ENCODE measurements at regions of chr1 and their contacts with region 1.

Region 1: DNA sequence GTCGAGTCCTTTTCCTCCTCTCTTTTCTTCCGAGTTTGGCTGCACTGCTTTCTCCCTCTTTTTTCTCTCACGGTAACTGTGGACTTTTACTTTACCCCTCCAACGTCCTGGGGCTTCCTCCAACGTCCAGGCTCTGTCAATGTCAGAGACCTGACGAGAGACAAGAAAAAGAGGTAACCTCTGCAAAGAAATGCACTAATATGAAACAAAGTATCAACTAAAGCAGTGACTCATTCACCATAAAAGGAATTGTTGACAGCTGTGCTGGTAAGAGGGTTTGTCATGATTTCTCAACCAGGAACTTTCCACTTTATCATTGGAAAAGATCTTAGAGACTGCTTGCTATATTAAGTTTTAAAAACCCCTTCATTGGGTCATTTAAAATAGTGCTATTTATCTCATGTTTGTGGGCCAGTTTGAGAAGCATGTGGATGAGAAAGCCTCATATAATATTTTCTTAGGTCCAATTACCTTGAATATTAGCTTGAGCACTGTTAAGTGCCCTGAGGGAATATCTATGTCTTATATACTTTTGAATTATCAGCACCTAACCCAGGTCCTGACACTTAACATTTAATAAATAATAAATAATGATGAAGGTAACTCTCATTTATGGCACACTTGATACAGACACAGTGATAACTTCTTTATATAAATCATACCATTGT is at the start of gene GBP2:
- DNase-seq: peak in 7 of 14 experiments; percentile 18 to 86 (median 41)
- ATAC-seq: peak; percentile 81
- H3K4me3 ChIP-seq: peak within 1 kb of the TSS; percentile 83
- H3K4me3 Mint-ChIP-seq: peak within 1 kb of the TSS; percentile 100
- H3K27ac ChIP-seq: peak within 1 kb of the TSS; percentile 51 to 86
- H3K27ac Mint-ChIP-seq: peak within 1 kb of the TSS; percentile 96
- H3K4me1 ChIP-seq: peaks cover 23% of the 10 kb centered on the region
- H3K4me1 Mint-ChIP-seq: peaks cover 76% of the 10 kb centered on the region
- H3K27me3 ChIP-seq: no peaks in the 10 kb centered on the region
- H3K27me3 Mint-ChIP-seq: no peaks in the 10 kb centered on the region
- CTCF ChIP-seq: no peak
- total RNA-seq, gene GBP2: 87.6 to 91.8 TPM

Region 2: DNA sequence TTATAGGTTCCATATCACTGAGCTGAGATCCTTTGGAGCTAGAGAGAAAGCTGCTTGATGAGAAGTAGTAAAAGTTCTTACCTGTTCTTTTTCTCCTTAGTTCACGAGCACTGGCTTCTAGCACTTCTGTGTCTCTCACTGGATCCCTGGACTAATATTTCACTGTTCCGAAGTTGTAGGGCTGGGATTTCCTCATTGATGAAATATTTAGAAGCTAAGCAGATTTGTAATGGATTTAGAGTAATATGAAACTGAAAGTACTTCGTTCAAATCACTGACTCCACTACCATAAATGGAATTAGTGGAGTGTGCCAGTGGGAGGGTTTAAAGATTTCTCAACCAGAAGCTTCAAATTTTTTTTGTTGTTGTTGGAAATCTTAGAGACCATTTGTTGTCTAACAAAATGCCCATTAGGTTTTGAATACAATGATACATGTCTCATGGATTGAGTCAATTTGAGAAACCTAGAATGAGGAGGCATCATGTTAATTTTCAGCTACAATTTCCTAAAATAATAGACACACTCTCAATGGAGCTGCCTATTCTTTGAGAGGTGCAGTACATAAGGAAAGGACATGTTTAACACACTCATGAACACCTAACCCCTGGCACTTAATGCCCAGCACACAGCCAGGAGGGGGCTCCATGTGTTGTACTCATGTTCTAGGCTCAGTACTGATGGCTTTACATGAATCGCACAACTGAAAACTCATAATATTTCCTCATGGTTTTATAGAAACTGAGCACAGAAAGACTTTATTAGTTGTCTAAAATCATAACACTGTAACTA is 60.8 kb before region 1 on chr1 and contains the start of gene GBP1:
- CTCF ChIA-PET with region 1: no interaction called
- POLR2A ChIA-PET with region 1: interaction called, 18 read pairs
- intact Hi-C with region 1: loop called in 1 of 2 experiments (anchors 5 kb)
- DNase-seq: peak in 4 of 14 experiments; percentile 14 to 81 (median 71)
- ATAC-seq: peak; percentile 87
- H3K4me3 ChIP-seq: peak within 1 kb of the TSS; percentile 61
- H3K4me3 Mint-ChIP-seq: peak within 1 kb of the TSS; percentile 97
- H3K27ac ChIP-seq: peak within 1 kb of the TSS; percentile 69 to 70
- H3K27ac Mint-ChIP-seq: peak within 1 kb of the TSS; percentile 93
- H3K4me1 ChIP-seq: peaks cover 13% of the 10 kb centered on the region
- H3K4me1 Mint-ChIP-seq: peaks cover 74% of the 10 kb centered on the region
- H3K27me3 ChIP-seq: no peaks in the 10 kb centered on the region
- H3K27me3 Mint-ChIP-seq: no peaks in the 10 kb centered on the region
- CTCF ChIP-seq: no peak
- total RNA-seq, gene GBP1: 15.5 to 16.5 TPM

Region 3: GRCh38 chr1:89114662-89115061 is 11.4 kb before region 1 on chr1:
- CTCF ChIA-PET with region 1: interaction called, 3 read pairs
- POLR2A ChIA-PET with region 1: interaction called, 32 read pairs
- intact Hi-C with region 1: no loop called
- DNase-seq: no peak
- ATAC-seq: no peak
- H3K4me3 ChIP-seq: no peak overlapping the region
- H3K4me3 Mint-ChIP-seq: no peak overlapping the region
- H3K27ac ChIP-seq: no peak overlapping the region
- H3K27ac Mint-ChIP-seq: peak overlapping the region; percentile 34
- H3K4me1 ChIP-seq: peaks cover 4% of the 10 kb centered on the region
- H3K4me1 Mint-ChIP-seq: peaks cover 24% of the 10 kb centered on the region
- H3K27me3 ChIP-seq: no peaks in the 10 kb centered on the region
- H3K27me3 Mint-ChIP-seq: no peaks in the 10 kb centered on the region
- CTCF ChIP-seq: no peak

Region 4: GRCh38 chr1:89280766-89281165 is 154.7 kb after region 1 on chr1:
- CTCF ChIA-PET with region 1: no interaction called
- POLR2A ChIA-PET with region 1: interaction called, 44 read pairs
- intact Hi-C with region 1: loop called in 1 of 2 experiments (anchors 5 kb)
- DNase-seq: peak in 1 of 14 experiments; percentile 39
- ATAC-seq: no peak
- H3K4me3 ChIP-seq: no peak overlapping the region
- H3K4me3 Mint-ChIP-seq: no peak overlapping the region
- H3K27ac ChIP-seq: no peak overlapping the region
- H3K27ac Mint-ChIP-seq: peak overlapping the region; percentile 33
- H3K4me1 ChIP-seq: peaks cover 63% of the 10 kb centered on the region
- H3K4me1 Mint-ChIP-seq: peaks cover 77% of the 10 kb centered on the region
- H3K27me3 ChIP-seq: no peaks in the 10 kb centered on the region
- H3K27me3 Mint-ChIP-seq: no peaks in the 10 kb centered on the region
- CTCF ChIP-seq: no peak

Region 5: DNA sequence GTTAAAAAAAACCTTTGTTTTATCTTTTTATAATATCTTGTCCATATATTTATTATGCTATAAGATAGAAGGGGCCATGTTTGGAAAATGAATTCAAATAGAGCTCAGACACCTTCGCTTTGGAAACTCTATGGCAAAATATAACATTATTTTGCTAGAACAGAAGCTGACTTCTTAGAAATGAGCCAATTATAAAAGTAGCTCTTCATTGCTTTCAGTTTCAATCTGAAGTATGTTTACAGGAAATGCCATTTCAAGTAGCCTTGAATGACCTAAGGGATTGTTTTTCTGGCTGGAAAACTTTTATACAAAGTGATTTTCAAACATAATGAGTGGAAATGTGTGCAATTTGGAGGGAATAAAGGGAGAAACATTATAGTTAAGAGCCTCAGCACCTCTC is 184.5 kb after region 1 on chr1:
- CTCF ChIA-PET with region 1: no interaction called
- POLR2A ChIA-PET with region 1: interaction called, 20 read pairs
- intact Hi-C with region 1: no loop called
- DNase-seq: peak in 3 of 14 experiments; percentile 14 to 80 (median 27)
- ATAC-seq: peak; percentile 52
- H3K4me3 ChIP-seq: peak overlapping the region; percentile 11
- H3K4me3 Mint-ChIP-seq: peak overlapping the region; percentile 47
- H3K27ac ChIP-seq: peak overlapping the region; percentile 24 to 38
- H3K27ac Mint-ChIP-seq: peak overlapping the region; percentile 78
- H3K4me1 ChIP-seq: peaks cover 31% of the 10 kb centered on the region
- H3K4me1 Mint-ChIP-seq: peaks cover 42% of the 10 kb centered on the region
- H3K27me3 ChIP-seq: no peaks in the 10 kb centered on the region
- H3K27me3 Mint-ChIP-seq: no peaks in the 10 kb centered on the region
- CTCF ChIP-seq: no peak

Region 6: GRCh38 chr1:89407360-89407759 is 281.3 kb after region 1 on chr1:
- CTCF ChIA-PET with region 1: no interaction called
- POLR2A ChIA-PET with region 1: no interaction called
- intact Hi-C with region 1: no loop called
- DNase-seq: peak in 2 of 14 experiments; percentile 5 to 45
- ATAC-seq: no peak
- H3K4me3 ChIP-seq: peak overlapping the region; percentile 39
- H3K4me3 Mint-ChIP-seq: peak overlapping the region; percentile 76
- H3K27ac ChIP-seq: no peak overlapping the region
- H3K27ac Mint-ChIP-seq: peak overlapping the region; percentile 8
- H3K4me1 ChIP-seq: no peaks in the 10 kb centered on the region
- H3K4me1 Mint-ChIP-seq: peaks cover 27% of the 10 kb centered on the region
- H3K27me3 ChIP-seq: no peaks in the 10 kb centered on the region
- H3K27me3 Mint-ChIP-seq: no peaks in the 10 kb centered on the region
- CTCF ChIP-seq: no peak

Region 7: DNA sequence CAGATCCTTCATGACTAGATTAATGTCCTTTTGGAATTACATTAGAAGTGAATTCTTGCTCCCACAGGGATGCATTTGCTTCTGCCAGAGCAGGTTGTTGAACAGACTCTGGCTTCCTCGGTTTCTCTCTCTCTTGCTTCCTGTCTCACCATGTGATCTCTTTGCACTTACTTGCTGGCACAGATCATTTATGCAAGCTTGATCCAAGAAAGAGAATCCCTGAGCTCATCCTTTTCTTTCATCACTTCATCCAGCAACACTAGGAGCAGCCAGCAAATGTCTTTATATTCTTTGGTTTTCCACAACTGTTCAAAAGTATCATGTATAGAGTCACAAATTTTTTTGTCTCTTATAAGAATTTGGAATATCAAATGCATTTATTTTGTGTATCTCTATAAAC is 1182.4 kb after region 1 on chr1:
- CTCF ChIA-PET with region 1: no interaction called
- POLR2A ChIA-PET with region 1: no interaction called
- intact Hi-C with region 1: no loop called
- DNase-seq: no peak
- ATAC-seq: no peak
- H3K4me3 ChIP-seq: no peak overlapping the region
- H3K4me3 Mint-ChIP-seq: no peak overlapping the region
- H3K27ac ChIP-seq: no peak overlapping the region
- H3K27ac Mint-ChIP-seq: no peak overlapping the region
- H3K4me1 ChIP-seq: no peaks in the 10 kb centered on the region
- H3K4me1 Mint-ChIP-seq: no peaks in the 10 kb centered on the region
- H3K27me3 ChIP-seq: no peaks in the 10 kb centered on the region
- H3K27me3 Mint-ChIP-seq: no peaks in the 10 kb centered on the region
- CTCF ChIP-seq: no peak